Tibial artery (tissue), 4 donors: ENCODE measurements at regions of chr2 and their contacts with region 1.

Region 1: DNA sequence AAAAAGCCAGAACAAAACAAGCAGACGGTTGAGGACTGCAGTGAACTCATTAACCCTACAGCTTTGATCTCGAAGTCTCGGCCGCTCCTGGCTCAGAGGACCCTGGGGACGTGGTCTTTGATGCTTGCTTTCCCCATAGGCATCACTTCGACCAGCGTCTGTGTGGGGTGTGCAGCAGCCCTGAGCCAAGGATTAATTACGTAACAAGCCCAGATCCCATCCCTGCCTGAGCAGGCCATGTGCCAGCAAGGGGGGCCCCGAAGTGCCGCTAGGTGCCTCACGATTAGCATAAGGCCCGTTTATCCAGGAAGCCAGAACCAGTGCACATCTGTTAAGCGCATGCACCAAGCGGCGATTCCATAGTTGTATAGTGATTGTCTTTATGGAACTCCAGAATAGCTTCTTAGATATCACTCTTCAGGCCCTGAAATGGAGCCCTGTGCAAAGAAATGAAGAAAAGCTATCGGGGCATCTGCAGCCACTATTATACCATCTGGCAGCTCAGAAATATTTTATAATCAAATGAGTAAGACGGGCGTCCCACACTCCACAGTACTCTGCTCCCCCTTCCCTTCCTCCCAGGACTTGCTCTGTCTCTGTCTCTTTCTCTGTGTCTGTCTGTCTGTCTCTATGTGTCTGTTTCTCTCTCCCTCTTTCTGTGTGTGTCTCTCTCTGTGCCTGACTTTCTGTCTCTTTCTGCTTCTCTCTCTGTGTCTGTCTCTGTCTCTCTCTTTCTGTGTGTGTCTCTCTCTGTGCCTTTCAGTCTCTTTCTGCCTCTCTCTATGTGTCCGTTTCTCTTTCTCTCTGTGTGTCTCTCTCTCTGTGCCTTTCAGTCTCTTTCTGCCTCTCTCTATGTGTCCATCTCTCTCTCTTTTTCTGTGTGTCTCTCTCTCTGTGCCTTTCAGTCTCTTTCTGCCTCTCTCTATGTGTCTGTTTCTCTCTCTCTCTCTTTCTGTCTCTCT is 41.7 kb downstream of the HPCAL1 start:
- DNase-seq: no peak
- H3K4me3 ChIP-seq: no peak overlapping the region
- H3K27ac ChIP-seq: no peak overlapping the region
- H3K4me1 ChIP-seq: peaks cover 0 to 13% (median 2%) of the 10 kb centered on the region in 4 donors
- H3K27me3 ChIP-seq: no peaks in the 10 kb centered on the region
- CTCF ChIP-seq: no peak

Region 2: GRCh38 chr2:10326707-10327594 is 17.4 kb before region 1 on chr2:
- intact Hi-C with region 1: loop called (anchors 2 kb)
- DNase-seq: no peak
- H3K4me3 ChIP-seq: no peak overlapping the region
- H3K27ac ChIP-seq: no peak overlapping the region
- H3K4me1 ChIP-seq: peaks cover 0 to 22% (median 5%) of the 10 kb centered on the region in 4 donors
- H3K27me3 ChIP-seq: no peaks in the 10 kb centered on the region
- CTCF ChIP-seq: no peak